ENCODE measurements at regions of chr9 and their contacts with region 1.

Region 1: GRCh38 chr9:108272349-108272899 is 583.4 kb downstream of the ACTL7B start:
- DNase-seq: no peak
- CTCF ChIP-seq: peak; percentile 10

Region 2: GRCh38 chr9:107489687-107490605 is 782.5 kb before region 1 on chr9 and contains the start of gene KLF4:
- in situ Hi-C with region 1: loop called (anchors 25 kb)
- DNase-seq: peak; percentile 93
- CTCF ChIP-seq: no peak

Region 3: DNA sequence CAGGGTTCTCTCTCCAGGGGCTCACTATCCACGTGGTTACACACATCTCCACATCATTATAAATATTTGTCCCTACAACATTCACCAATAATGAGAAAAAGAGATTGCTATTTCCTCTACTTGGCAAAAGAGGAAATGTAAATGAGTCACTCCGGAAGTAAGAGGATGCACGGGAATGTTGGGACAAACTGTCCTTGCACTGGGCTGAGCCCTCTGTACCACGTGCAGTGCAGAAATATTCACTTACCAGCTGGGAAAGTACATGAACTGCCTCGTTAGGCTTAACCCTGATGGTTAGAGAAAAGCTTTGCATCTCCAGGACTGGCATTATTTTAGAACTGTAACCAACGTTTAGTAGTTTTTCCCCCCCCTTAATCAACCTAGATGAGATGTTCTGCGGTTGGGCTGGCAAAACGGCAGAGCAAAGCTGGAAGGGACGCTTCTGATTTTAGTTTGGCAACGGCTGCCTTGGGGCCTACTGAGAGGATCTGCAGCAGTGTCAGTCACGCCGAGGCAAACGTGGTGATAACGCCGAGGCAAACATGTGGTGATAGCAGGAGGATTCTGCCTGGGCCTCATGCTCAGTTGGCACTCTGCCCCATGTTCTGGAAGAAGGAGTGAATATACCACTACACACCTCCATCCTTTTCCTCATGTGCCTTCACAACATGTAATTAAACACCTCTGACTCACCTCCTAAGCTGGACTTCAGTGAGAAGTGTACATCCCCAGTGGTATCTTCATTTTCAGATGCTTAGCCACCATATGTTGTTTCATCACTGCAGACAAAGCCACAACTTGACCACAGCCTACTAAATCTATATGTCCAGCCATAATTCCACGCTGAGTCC is 121.5 kb before region 1 on chr9:
- in situ Hi-C with region 1: no loop called
- DNase-seq: no peak
- CTCF ChIP-seq: no peak